GM10248 (cell line): ENCODE measurements at regions of chr17 and their contacts with region 1.

Region 1: GRCh38 chr17:29931231-29931932 is 1.4 kb upstream of the SSH2 start:
- DNase-seq: peak; percentile 66
- CTCF ChIP-seq: peak; percentile 76

Region 2: DNA sequence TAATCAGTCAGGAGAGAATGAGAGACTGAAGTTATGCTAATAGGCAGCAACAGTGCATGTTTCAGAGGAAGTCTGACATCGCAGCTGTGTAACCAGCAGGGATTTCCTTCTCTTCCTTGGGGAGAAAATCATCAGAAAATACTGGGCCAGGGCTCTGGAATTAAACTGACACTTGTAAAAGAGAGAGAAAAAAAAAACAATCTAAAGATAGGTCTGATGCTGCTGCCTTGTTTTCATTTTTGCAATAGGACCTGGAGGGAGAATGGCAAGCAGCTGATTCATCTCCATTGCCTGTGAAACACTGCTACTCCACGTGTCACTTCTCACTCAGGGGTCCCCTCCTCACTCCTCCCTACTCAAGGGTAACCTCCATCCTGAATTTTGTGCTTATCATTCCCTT is 291.0 kb before region 1 on chr17:
- CTCF ChIA-PET with region 1: interaction called, 25 read pairs
- POLR2A ChIA-PET with region 1: no interaction called
- DNase-seq: no peak
- CTCF ChIP-seq: no peak

Region 3: DNA sequence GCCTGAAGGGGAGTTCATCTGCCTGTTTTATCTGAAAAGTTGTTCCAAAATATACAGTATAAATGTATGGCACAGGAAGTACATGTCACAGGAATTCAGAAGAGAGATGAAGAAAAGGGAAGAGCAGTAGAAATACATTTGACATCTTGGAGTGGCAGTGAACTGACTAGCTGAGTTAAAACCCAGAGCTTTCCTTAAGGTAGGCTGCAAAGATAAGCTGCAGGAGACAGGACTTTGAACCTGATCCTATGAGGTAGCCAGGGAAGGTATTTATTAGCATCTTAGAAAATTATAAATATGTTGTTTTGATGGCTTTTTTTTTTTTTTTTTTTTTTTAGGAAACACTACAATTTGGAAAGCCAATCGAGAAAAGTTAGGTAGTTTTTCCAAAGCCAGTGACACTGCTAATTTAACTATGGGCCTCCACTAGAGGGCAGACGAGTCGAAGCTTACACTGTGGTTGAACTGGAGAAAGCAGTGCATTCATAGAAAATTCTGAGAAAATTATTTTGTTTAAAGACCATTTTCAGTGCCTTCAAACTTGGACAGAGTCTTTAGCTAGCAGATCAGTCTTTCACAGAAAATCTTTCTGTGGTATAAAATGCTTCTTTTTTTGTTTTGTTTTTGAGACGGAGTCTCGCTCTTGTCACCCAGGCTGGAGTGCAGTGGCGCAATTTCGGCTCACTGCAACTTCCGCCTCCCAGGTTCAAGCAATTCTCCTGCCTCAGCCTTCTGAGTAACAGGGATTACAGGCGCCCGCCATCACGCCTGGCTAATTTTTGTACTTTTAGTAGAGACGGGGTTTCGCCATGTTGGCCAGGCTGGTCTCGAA is 123.6 kb before region 1 on chr17:
- CTCF ChIA-PET with region 1: interaction called, 271 read pairs
- POLR2A ChIA-PET with region 1: interaction called, 6 read pairs
- DNase-seq: peak; percentile 68
- CTCF ChIP-seq: peak; percentile 79

Region 4: GRCh38 chr17:29855686-29856085 is 75.7 kb before region 1 on chr17:
- CTCF ChIA-PET with region 1: interaction called, 17 read pairs
- POLR2A ChIA-PET with region 1: no interaction called
- DNase-seq: no peak
- CTCF ChIP-seq: no peak

Region 5: GRCh38 chr17:29909236-29910003 is 22.0 kb before region 1 on chr17:
- CTCF ChIA-PET with region 1: interaction called, 48 read pairs
- POLR2A ChIA-PET with region 1: interaction called, 3 read pairs
- DNase-seq: no peak
- CTCF ChIP-seq: no peak

Region 6: DNA sequence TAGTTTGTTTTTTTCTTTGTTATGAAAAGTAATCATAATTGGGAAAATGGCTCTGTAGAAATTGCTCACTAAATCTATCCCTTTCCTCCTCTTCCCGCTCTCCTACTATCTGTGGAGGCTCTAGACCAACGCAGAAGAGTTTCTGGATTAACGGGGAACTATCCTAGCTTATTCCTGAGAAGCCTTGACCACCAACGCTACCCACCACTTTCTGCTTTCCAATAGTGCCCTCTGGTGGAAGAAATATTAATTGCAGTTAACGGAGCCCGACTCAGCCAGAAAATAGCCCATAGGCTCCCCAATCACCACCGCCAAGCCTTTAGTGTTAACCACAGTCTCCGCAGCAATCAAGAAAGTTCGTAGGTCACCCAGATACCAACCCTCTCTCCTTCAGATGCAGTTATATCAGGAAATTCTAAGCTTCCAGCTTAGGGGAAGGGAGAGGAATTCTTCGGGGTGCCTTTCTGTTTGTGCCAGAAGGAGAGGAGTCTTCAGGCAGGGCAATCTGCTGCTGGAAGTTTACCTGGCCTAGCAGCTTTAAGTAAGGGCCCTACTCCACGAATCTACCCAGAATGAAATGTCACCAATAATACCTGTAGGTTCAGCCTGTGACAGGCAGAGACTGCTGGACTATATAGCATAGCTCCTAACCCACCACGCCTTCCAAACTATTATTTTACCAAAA is 162.2 kb after region 1 on chr17:
- CTCF ChIA-PET with region 1: interaction called, 17 read pairs
- POLR2A ChIA-PET with region 1: interaction called, 3 read pairs
- DNase-seq: peak; percentile 72
- CTCF ChIP-seq: peak; percentile 79